ENCODE measurements at regions of chr22 and their contacts with region 1.

Region 1: DNA sequence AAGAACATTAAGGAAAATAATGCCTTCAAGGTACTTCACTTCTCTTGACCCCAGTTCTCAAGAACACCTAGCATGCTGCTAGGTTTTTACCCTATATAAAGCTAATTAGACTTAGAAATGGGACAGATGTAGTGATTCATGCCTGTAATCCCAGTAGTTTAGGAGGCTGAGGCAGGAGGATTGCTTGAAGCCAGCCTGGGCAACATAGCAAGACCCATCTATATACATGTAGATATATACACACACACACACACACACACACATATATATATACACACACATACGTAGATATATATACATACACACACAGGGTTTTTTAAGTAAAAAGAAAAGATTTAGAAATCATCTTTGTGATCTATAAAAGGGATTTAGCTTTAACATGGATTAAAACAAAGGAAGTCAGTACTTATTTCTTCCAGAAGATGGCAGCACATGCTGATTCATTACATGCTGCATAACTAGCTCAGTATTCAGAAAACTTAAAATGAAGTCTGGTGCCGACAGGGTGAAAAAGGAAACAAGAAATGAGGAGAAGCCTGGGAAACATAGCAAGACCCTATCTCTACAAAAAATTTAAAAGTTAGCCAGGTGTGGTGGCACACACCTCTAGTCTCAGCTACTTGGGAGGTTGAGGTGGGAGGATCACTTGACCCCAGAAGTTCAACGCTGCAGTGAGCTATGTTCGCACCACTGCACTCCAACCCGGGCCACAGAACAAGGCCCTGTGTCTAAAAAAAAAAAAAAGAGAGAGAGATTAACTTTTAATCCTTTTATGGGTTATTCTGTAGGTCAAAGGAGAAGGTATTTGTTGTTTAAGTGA is 28.5 kb upstream of the RBX1 start:
- DNase-seq: peak in 1 of 2 donors; percentile 2
- ATAC-seq: peak; percentile 81 to 86
- H3K4me3 ChIP-seq: peak overlapping the region in 1 of 4 donors; percentile 20
- H3K27ac ChIP-seq: no peak overlapping the region
- H3K4me1 ChIP-seq: peaks cover 0 to 4% of the 10 kb centered on the region in 2 donors
- H3K27me3 ChIP-seq: no peaks in the 10 kb centered on the region
- CTCF ChIP-seq: peak; percentile 73 to 83 (median 79)
- POLR2A ChIP-seq: no peak

Region 2: GRCh38 chr22:40898850-40899357 is 23.8 kb before region 1 on chr22:
- in situ Hi-C with region 1: no loop called
- intact Hi-C with region 1: no loop called
- DNase-seq: no peak
- ATAC-seq: peak in 1 of 2 donors; percentile 64
- H3K4me3 ChIP-seq: no peak overlapping the region
- H3K27ac ChIP-seq: no peak overlapping the region
- H3K4me1 ChIP-seq: no peaks in the 10 kb centered on the region
- H3K27me3 ChIP-seq: no peaks in the 10 kb centered on the region
- CTCF ChIP-seq: peak in 2 of 5 experiments; percentile 9 to 35
- POLR2A ChIP-seq: no peak

Region 3: GRCh38 chr22:41001722-41002122 is 79.0 kb after region 1 on chr22:
- in situ Hi-C with region 1: no loop called
- intact Hi-C with region 1: no loop called
- DNase-seq: no peak
- ATAC-seq: no peak
- H3K4me3 ChIP-seq: no peak overlapping the region
- H3K27ac ChIP-seq: no peak overlapping the region
- H3K4me1 ChIP-seq: no peaks in the 10 kb centered on the region
- H3K27me3 ChIP-seq: no peaks in the 10 kb centered on the region
- CTCF ChIP-seq: no peak
- POLR2A ChIP-seq: no peak

Region 4: DNA sequence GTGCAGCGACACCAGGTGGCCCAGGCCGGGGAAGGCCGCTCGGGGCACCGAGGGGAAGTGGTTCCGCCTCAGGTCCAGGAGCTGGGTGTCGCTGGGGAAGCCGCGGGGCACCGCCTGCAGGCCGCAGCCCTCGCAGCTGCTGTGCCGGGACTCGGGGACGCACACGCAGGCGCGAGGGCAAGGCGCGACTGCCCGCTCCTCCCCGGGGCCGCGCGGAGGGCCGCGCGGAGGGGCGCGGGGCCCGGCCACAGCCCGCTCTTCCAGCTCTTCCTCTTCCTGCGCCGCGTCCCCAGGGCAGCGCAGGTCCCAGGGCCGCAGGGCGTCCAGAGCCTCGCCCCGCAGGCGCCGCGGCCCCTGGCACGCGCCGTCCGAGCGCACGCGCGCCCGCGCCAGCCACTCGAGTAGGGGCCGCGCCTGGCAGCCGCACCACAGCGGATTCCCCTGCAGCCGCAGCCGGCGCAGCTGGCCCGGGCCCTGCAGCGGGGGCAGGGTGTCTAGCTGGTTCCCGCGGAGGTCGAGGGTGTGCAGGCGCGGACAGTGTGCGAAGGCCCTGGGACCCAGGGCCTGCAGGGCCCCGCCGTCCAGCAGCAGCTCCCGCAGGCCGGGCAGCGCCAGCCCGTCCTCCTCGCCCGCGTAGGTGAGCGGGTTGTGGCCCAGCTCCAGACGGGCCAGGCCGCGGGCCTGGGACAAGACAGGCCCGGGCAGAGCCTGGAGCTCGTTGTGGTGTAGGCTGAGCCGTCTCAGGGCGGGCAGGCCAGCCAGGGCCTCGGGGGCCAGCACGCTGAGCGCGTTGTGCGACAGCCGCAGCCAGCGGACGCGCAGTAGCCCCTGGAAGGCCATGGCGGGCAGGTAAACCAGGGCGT is 315.2 kb after region 1 on chr22:
- in situ Hi-C with region 1: no loop called
- intact Hi-C with region 1: loop called (anchors 1 kb)
- DNase-seq: peak; percentile 17 to 58
- ATAC-seq: peak; percentile 61 to 67
- H3K4me3 ChIP-seq: peak overlapping the region; percentile 33 to 53 (median 44)
- H3K27ac ChIP-seq: no peak overlapping the region
- H3K4me1 ChIP-seq: peaks cover 0 to 6% of the 10 kb centered on the region in 2 donors
- H3K27me3 ChIP-seq: no peaks in the 10 kb centered on the region
- CTCF ChIP-seq: peak; percentile 24 to 57 (median 49)
- POLR2A ChIP-seq: no peak

Measured in gastrocnemius medialis (tissue), 4 donors.